GM10248 (cell line): ENCODE measurements at regions of chr11 and their contacts with region 1.

Region 1: GRCh38 chr11:95358511-95359340 is 127.7 kb upstream of the SESN3 start:
- DNase-seq: no peak
- CTCF ChIP-seq: no peak

Region 2: DNA sequence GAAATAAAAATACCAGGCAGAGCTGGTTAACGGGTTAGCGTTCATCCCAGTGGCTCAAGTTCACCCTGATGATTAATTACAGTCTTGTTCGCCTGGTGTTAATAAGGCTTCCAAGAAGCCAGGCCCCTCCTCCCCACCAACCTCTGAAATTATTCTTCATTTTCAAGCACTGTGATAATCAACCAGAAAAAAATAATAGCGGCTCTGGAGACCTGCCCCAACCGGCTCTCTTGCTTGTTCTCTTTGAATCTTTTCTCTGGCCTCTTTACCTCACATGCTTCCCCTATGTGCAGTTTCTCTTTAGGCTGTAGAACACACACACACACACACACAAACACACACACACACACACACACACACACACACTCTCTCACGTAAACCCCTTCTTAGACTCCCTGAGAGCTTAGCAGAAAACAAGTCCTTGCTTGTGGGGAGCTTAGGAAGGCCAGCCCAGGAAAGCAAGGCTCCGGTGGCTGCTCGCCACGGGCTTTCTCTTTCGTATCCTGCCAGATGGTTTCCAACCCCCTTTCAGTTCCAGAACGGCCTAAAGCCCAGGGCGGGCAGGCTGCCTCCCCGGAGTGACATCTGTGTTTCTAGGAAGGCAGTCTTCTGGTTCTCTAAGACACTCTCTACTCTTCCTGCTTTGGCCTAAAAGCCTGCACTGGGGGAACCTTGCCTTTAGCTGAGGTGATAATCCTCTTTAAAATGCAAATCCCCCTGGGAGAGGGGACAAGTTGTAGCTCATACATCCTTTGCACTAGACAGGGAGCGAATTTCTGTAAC is 21.4 kb before region 1 on chr11:
- CTCF ChIA-PET with region 1: interaction called, 13 read pairs
- POLR2A ChIA-PET with region 1: no interaction called
- DNase-seq: peak; percentile 57
- CTCF ChIP-seq: no peak